Esophagus muscularis mucosa (tissue), 4 donors: ENCODE measurements at regions of chr4 and their contacts with region 1.

Region 1: DNA sequence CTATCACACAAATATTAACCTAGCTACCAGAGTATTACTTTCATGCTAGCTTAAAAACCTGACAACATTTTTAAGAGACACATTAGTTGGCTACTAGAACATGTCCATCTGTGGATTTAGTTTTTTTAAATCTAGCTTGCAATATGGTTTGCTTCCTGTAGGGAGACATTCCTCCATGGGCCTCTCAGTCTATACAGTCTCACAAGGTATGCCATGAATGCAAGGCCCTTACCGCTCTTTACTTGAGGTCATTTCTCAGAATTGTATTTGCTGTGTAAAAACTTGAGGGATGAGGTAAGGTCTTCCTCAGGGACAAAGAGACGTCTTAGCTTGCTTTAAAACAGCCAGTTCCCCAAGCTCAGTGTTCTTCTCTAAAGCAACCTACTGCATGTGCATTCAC is 26.9 kb downstream of the UBA6 start:
- DNase-seq: no peak
- H3K4me3 ChIP-seq: no peak overlapping the region
- H3K27ac ChIP-seq: no peak overlapping the region
- H3K4me1 ChIP-seq: no peaks in the 10 kb centered on the region
- H3K27me3 ChIP-seq: no peaks in the 10 kb centered on the region
- CTCF ChIP-seq: no peak
- EP300 ChIP-seq: no peak
- POLR2A ChIP-seq: no peak

Region 2: DNA sequence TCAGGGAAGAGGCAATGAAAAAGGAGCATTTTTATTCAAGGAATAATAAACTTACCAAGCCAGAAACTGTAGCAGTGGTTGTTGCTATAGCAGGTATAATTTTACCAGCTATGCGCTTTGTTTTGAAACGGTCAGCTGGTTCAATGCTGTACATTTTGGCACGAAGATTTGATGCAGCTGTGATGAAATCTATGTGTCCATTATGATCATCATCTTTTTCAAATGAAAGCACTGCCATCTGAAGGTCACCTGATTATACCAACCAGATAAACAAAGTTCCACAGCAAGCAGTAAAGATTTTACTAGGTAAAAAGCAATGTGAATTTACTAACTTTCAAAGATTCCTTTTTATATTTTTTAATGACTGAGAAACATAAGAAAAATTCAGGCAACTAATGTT is 49.2 kb before region 1 on chr4:
- intact Hi-C with region 1: loop called (anchors 10 kb)
- DNase-seq: no peak
- H3K4me3 ChIP-seq: no peak overlapping the region
- H3K27ac ChIP-seq: no peak overlapping the region
- H3K4me1 ChIP-seq: no peaks in the 10 kb centered on the region
- H3K27me3 ChIP-seq: no peaks in the 10 kb centered on the region
- CTCF ChIP-seq: no peak
- EP300 ChIP-seq: no peak
- POLR2A ChIP-seq: no peak